A673 (cell line): ENCODE measurements at regions of chr22 and their contacts with region 1.

Region 1: DNA sequence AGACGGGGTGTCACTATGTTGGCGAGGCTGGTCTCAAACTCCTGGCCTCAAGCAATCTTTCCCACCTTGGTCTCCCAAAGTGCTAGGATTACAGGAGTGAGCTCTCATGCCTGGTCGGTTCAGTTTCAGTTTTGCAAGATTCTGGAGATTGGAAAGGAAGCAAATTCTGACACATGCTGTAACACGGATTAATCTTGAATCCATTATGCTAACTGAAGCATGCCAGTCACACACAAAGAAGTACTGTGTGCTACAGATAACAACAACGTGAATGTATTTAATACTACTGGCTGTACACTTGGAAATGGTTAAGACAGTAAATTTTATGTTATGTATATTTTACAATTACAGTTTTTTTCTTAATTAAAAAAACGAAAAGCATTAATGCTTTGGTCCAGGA is 107.6 kb downstream of the MED15 start:
- DNase-seq: peak; percentile 40
- H3K4me3 ChIP-seq: no peak overlapping the region
- H3K27ac ChIP-seq: no peak overlapping the region
- H3K4me1 ChIP-seq: no peaks in the 10 kb centered on the region
- H3K27me3 ChIP-seq: no peaks in the 10 kb centered on the region
- CTCF ChIP-seq: no peak

Region 2: DNA sequence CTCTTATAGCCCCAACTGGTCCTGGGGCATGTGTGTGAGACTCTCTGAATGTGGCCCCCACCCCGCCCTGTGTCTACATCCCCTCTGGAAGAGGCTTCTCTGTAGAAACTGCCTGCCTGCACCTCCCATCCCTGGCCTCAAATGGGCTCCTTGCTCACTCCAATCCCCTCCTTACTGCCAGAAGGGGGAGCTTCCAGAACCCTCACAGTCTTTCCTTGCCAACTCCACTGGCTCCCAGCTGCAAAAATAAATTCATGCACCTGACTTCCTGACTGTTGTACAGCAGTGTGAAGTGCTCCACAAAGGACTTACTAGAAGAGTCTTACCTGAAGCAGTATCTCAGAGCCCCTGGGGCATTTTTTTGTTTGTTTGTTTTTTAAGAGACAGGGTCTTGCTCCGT is 143.7 kb after region 1 on chr22:
- CTCF ChIA-PET with region 1: no interaction called
- POLR2A ChIA-PET with region 1: interaction called, 21 read pairs
- intact Hi-C with region 1: no loop called
- DNase-seq: peak; percentile 23
- H3K4me3 ChIP-seq: no peak overlapping the region
- H3K27ac ChIP-seq: no peak overlapping the region
- H3K4me1 ChIP-seq: no peaks in the 10 kb centered on the region
- H3K27me3 ChIP-seq: no peaks in the 10 kb centered on the region
- CTCF ChIP-seq: peak; percentile 36; the same call in 1 of the 2 replicates